ENCODE measurements at regions of chr19 and their contacts with region 1.

Region 1: DNA sequence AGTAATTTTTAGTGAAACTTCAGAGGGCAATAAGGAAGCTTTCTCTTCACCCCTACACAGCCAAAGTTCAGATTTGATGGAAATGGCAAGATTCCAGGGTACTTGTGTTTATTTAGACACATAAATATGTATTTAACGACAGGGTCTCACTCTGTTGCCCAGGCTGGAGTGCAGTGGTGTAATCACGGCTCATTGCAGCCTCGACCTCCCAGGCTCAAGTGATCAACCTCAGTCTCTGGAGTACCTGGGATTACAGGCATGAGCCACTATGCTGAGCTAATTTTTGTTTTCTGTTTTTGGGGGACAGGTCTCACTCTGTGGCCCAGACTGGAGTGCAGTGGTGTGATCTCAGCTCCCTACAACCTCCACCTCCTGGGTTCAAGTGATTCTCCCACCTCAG is 2.0 kb upstream of the SYCE2 start:
- H3K4me3 ChIP-seq: no peak overlapping the region
- H3K27ac ChIP-seq: no peak overlapping the region
- H3K4me1 ChIP-seq: no peaks in the 10 kb centered on the region
- CTCF ChIP-seq: no peak

Region 2: GRCh38 chr19:12890787-12891552 is 30.1 kb before region 1 on chr19 and contains the start of gene GCDH:
- CTCF ChIA-PET with region 1: interaction called, 3 read pairs
- POLR2A ChIA-PET with region 1: interaction called, 18 read pairs
- H3K4me3 ChIP-seq: peak within 1 kb of the TSS; percentile 96
- H3K27ac ChIP-seq: no peak within 1 kb of the TSS
- H3K4me1 ChIP-seq: no peaks in the 10 kb centered on the region
- CTCF ChIP-seq: no peak

Measured in HEK293 (cell line).